ENCODE measurements at regions of chr13 and their contacts with region 1.

Region 1: GRCh38 chr13:33865945-33866344 is 48.0 kb downstream of the RFC3 start:
- DNase-seq: no peak
- H3K4me3 ChIP-seq: no peak overlapping the region
- H3K27ac ChIP-seq: no peak overlapping the region
- H3K4me1 ChIP-seq: no peaks in the 10 kb centered on the region
- H3K27me3 ChIP-seq: no peaks in the 10 kb centered on the region
- CTCF ChIP-seq: no peak
- EP300 ChIP-seq: no peak
- POLR2A ChIP-seq: no peak
- RAD21 ChIP-seq: no peak

Region 2: GRCh38 chr13:33806470-33807248 is 59.3 kb before region 1 on chr13:
- CTCF ChIA-PET with region 1: no interaction called
- POLR2A ChIA-PET with region 1: no interaction called
- DNase-seq: no peak
- H3K4me3 ChIP-seq: no peak overlapping the region
- H3K27ac ChIP-seq: no peak overlapping the region
- H3K4me1 ChIP-seq: no peaks in the 10 kb centered on the region
- H3K27me3 ChIP-seq: no peaks in the 10 kb centered on the region
- CTCF ChIP-seq: no peak
- EP300 ChIP-seq: no peak
- POLR2A ChIP-seq: no peak
- RAD21 ChIP-seq: no peak

Region 3: GRCh38 chr13:33879118-33879517 is 13.2 kb after region 1 on chr13:
- CTCF ChIA-PET with region 1: interaction called, 17 read pairs
- POLR2A ChIA-PET with region 1: no interaction called
- DNase-seq: no peak
- H3K4me3 ChIP-seq: no peak overlapping the region
- H3K27ac ChIP-seq: no peak overlapping the region
- H3K4me1 ChIP-seq: no peaks in the 10 kb centered on the region
- H3K27me3 ChIP-seq: no peaks in the 10 kb centered on the region
- CTCF ChIP-seq: no peak
- EP300 ChIP-seq: no peak
- POLR2A ChIP-seq: no peak
- RAD21 ChIP-seq: no peak